PC-3 (cell line): ENCODE measurements at regions of chr6 and their contacts with region 1.

Region 1: GRCh38 chr6:70398783-70399728 is 14.3 kb upstream of the FAM135A start:
- DNase-seq: peak; percentile 89
- ATAC-seq: peak; percentile 85
- H3K4me3 ChIP-seq: peak overlapping the region; percentile 51
- H3K27ac ChIP-seq: peak overlapping the region; percentile 93
- H3K4me1 ChIP-seq: peaks cover 37% of the 10 kb centered on the region
- H3K27me3 ChIP-seq: no peaks in the 10 kb centered on the region
- CTCF ChIP-seq: no peak

Region 2: DNA sequence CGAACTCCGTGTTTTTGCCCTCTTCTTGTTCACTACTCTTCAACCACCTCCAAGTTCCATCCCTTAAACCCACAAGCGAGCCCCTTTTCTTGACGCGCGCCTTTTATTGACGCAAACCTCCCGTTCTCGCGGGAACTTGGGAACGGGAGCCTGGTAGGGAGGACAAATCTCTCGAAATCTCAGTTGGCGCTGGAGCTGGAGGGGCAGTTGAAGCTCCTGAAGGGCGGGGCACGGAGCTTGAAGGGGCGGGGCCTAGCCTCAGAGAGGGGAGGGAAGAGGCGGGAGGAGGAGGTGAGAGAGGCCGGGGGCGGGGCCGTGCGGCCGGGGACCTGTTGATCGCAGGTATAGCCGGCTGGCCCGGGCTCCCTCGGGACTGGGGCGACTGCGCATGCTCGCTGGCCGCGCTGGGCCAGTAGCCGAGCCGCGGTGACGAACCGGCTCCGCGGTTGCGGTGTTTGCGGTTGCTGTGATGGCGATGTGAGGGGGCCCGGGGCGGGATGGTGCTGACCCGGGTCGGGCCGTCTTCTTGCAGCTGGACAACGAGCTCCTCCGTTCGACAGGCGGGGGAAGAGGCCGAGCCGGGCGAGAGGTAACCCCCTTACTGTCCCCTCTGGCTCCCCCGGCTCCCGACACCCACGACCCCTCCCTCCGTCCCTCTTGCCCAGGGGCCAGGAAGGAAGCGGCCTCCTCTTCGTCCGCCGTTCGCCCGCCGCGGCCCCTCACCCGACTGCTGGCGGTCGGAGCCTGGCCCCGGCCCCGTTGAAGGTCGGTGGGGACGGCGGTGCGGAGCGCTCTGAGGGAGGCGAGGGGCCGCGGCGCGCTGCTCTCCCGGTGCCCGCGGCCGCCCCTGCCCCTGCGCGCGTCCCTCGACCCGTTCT is 14.3 kb after region 1 on chr6 and contains the start of gene FAM135A:
- CTCF ChIA-PET with region 1: no interaction called
- POLR2A ChIA-PET with region 1: interaction called, 3 read pairs
- intact Hi-C with region 1: loop called (anchors 1 kb)
- DNase-seq: peak; percentile 97
- ATAC-seq: peak; percentile 91
- H3K4me3 ChIP-seq: peak within 1 kb of the TSS; percentile 90
- H3K27ac ChIP-seq: no peak within 1 kb of the TSS
- H3K4me1 ChIP-seq: peaks cover 14% of the 10 kb centered on the region
- H3K27me3 ChIP-seq: no peaks in the 10 kb centered on the region
- CTCF ChIP-seq: no peak
- total RNA-seq, gene FAM135A: 15.5 and 18.1 TPM in 2 replicates

Region 3: GRCh38 chr6:70421509-70421908 is 22.5 kb after region 1 on chr6:
- CTCF ChIA-PET with region 1: no interaction called
- POLR2A ChIA-PET with region 1: no interaction called
- intact Hi-C with region 1: loop called (anchors 2 kb)
- DNase-seq: no peak
- ATAC-seq: no peak
- H3K4me3 ChIP-seq: no peak overlapping the region
- H3K27ac ChIP-seq: no peak overlapping the region
- H3K4me1 ChIP-seq: peaks cover 4% of the 10 kb centered on the region
- H3K27me3 ChIP-seq: no peaks in the 10 kb centered on the region
- CTCF ChIP-seq: no peak